Activated T-helper 1 cell treated with anti-CD3 and anti-CD28 coated beads, Interleukin-12 subunit alpha, Interleukin-12 subunit beta, Interleukin-2, Interleukin-4 antibody, amounts not matched to agents 30 ng/mL and 10 ng/mL and 1 ng/mL, durations not matched to agents 14 hours and 24 hours and 36 hours (primary cell): ENCODE measurements at regions of chr1 and their contacts with region 1.

Region 1: DNA sequence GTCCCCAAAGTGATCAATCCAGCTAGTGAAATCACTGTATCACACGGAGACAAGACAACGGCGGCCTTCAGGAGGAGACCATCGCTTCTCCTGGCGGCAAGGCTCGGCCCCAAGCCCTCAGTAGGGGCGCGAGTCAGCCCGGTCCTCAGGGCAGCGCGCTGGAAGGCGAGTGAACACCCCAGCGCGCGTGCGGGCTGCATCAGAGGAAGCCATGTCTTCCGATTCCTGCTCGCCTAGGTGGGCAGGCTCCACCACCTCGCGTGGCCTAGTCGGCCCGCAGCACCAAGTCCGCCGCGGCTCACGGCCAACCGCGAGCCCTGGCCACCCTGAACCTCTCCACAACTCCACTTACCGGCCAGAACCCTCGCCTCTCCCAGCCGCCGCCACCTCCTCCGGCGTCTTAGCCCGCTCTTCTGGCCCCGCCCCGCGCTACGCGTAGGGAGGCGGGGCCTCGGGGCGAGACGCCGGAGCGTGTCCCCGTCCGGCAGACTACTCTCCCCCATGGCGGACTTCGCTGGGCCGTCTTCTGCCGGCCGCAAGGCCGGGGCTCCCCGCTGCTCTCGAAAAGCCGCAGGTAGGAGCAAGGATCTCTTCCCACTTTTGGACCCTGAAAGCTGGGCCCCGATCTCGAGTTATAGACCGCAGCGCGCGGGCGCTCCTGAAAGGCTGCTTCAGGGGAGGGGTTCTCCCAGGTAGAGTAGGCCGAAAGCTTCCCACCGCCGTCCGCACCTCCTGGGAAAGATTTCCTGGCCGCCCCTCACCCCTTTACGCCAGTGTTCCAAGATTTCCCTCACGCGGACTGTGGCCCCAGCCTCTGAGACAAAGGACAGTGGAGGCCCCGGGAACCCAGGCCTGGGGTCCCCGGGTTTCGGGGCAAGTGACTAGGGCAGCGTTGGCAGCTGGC is at the starts of genes GLMN and RPAP2:
- DNase-seq: peak; percentile 74
- H3K4me3 Mint-ChIP-seq: peak within 1 kb of the TSS; percentile 97
- H3K27ac Mint-ChIP-seq: peak within 1 kb of the TSS; percentile 99
- H3K4me1 Mint-ChIP-seq: peaks cover 40% of the 10 kb centered on the region
- H3K27me3 Mint-ChIP-seq: no peaks in the 10 kb centered on the region
- total RNA-seq, gene GLMN: 29.2 and 29.7 TPM in 2 replicates
- total RNA-seq, gene RPAP2: 42.0 and 44.8 TPM in 2 replicates

Region 2: GRCh38 chr1:91993256-91993655 is 305.6 kb before region 1 on chr1:
- intact Hi-C with region 1: no loop called
- DNase-seq: no peak
- H3K4me3 Mint-ChIP-seq: no peak overlapping the region
- H3K27ac Mint-ChIP-seq: no peak overlapping the region
- H3K4me1 Mint-ChIP-seq: no peaks in the 10 kb centered on the region
- H3K27me3 Mint-ChIP-seq: peaks cover 3% of the 10 kb centered on the region

Region 3: DNA sequence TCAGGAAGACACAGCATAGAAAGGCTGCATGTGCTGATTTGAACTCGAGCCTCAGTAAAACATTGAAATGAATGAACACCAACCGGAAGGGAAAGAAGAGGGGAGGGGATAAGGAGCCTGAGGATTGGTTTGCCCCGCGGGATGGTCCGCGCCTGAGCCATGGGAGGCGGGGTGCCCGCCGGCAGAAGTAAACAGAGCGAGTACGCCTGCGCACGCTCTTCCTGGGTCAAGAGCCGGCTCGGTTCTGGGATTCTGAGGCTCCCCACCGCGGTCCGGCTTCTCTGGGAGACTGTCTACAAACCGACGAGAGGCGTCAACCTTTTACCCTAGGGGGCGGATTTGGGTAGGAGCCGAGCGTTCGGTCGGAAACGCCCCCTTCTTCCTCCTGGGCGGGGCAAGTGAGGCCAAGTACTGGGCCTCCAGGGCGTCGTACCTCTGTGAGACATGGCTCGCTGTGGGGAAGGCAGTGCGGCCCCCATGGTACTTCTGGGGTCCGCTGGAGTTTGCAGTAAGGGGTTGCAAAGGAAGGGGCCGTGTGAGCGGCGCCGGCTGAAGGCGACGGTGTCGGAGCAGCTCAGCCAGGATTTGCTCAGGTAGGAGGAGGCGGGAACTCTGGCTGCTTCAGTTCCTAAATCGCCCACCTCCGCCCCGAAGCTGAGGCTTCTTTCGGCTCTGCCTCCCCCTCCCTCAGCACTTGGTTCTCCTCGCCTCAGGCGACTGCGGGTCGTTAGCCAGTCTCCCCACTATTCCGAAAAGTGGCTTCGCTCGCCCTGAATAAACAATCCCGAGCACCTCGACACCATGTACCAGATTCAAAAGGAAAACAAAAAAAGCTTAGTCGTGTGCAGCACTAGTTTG is 218.5 kb before region 1 on chr1 and contains the start of gene BTBD8:
- intact Hi-C with region 1: loop called (anchors 1 kb)
- DNase-seq: peak; percentile 79
- H3K4me3 Mint-ChIP-seq: peak within 1 kb of the TSS; percentile 86
- H3K27ac Mint-ChIP-seq: peak within 1 kb of the TSS; percentile 85
- H3K4me1 Mint-ChIP-seq: peaks cover 13% of the 10 kb centered on the region
- H3K27me3 Mint-ChIP-seq: no peaks in the 10 kb centered on the region
- total RNA-seq, gene BTBD8: 0.91 and 1.0 TPM in 2 replicates

Region 4: DNA sequence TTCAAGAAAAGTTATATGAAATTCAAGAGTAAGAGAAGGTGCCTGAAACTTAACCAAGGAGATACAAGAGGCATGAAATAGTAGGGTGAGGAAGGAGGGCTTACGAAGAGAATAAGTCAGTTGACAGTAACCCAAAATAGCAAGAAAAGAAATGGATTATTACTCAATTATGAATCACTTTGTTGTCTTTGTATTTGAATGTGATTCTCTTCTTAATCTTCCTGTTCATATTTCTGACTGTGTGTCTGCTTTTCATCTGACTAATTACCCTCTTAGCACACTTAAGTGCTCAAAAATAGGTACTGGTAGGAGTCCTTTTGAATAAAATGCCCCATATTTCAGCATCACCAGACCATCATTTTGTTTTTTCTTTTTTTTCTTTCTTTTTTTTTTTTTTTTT is 39.5 kb before region 1 on chr1:
- intact Hi-C with region 1: no loop called
- DNase-seq: no peak
- H3K4me3 Mint-ChIP-seq: no peak overlapping the region
- H3K27ac Mint-ChIP-seq: no peak overlapping the region
- H3K4me1 Mint-ChIP-seq: peaks cover 10% of the 10 kb centered on the region
- H3K27me3 Mint-ChIP-seq: no peaks in the 10 kb centered on the region

Region 5: DNA sequence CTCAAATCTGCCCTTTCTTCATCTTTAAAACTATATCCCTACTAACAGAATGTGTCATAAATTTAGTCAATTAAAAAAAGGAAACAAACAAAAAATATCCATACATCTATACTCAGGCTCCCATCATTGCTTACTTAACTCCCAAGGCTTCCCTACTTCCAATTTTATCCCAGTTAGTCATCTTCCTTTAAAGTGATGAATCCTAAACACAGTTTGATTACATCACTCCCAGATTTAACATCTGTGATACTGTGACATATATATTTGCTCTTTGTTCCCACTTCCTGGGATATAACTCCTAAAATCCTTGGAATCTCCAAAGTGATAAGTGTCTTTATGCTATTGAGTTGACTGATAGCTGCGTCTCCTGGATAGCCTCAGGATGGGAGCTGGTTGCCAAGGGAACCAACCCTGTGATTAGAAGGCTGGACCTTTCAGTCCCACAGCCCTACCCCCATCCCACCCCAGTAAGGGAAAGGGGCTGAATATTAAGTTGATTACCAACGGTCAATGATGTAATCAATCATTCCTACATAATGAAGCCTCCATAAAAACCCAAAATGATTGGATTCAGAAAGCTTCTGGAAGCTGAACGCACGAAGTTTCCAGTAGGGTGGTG is 21.6 kb before region 1 on chr1:
- intact Hi-C with region 1: no loop called
- DNase-seq: no peak
- H3K4me3 Mint-ChIP-seq: no peak overlapping the region
- H3K27ac Mint-ChIP-seq: no peak overlapping the region
- H3K4me1 Mint-ChIP-seq: peaks cover 26% of the 10 kb centered on the region
- H3K27me3 Mint-ChIP-seq: no peaks in the 10 kb centered on the region

Region 6: DNA sequence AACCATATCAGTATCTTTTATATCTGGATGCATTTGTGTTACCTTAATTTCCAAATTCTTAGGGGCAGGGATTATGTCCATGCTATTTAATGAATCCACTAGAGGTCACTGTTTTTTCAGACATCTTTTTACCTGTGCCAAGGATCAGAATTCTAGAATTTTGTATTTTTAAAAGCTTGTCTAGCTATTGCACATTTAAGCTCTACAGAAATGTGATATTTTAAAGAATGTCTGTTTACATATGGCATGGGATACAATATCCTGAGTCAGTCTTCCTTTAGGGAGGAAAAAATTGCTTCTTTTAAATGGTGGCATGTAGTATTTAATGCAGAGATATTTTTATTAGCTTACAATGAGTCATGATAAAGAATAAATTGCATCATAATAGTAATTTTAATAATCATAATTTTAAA is 11.4 kb after region 1 on chr1:
- intact Hi-C with region 1: loop called (anchors 1 kb)
- DNase-seq: no peak
- H3K4me3 Mint-ChIP-seq: no peak overlapping the region
- H3K27ac Mint-ChIP-seq: no peak overlapping the region
- H3K4me1 Mint-ChIP-seq: peaks cover 42% of the 10 kb centered on the region
- H3K27me3 Mint-ChIP-seq: no peaks in the 10 kb centered on the region

Region 7: GRCh38 chr1:92411511-92411910 is 112.7 kb after region 1 on chr1:
- intact Hi-C with region 1: no loop called
- DNase-seq: no peak
- H3K4me3 Mint-ChIP-seq: no peak overlapping the region
- H3K27ac Mint-ChIP-seq: peak overlapping the region; percentile 53
- H3K4me1 Mint-ChIP-seq: peaks cover 35% of the 10 kb centered on the region
- H3K27me3 Mint-ChIP-seq: no peaks in the 10 kb centered on the region

Region 8: DNA sequence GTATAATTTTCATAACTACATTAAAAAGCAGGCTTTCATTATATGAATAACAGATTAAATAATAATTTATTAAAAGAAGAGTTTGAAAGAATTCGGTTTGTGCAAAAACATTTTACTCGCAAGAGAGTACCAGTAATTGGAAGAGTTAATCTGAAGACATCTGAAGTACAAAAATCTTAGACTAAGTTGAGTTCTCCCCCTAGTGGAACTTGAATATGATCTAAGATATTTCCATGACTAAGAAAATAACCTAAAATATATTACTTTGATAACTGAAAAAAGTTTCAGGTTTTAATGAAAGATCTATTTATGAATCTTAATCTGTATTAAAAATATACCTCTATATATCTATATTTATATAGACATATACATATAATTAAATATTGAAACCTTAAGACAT is 300.4 kb after region 1 on chr1:
- intact Hi-C with region 1: loop called (anchors 5 kb)
- DNase-seq: no peak
- H3K4me3 Mint-ChIP-seq: no peak overlapping the region
- H3K27ac Mint-ChIP-seq: no peak overlapping the region
- H3K4me1 Mint-ChIP-seq: peaks cover 27% of the 10 kb centered on the region
- H3K27me3 Mint-ChIP-seq: no peaks in the 10 kb centered on the region